ENCODE measurements at regions of chr2 and their contacts with region 1.

Region 1: DNA sequence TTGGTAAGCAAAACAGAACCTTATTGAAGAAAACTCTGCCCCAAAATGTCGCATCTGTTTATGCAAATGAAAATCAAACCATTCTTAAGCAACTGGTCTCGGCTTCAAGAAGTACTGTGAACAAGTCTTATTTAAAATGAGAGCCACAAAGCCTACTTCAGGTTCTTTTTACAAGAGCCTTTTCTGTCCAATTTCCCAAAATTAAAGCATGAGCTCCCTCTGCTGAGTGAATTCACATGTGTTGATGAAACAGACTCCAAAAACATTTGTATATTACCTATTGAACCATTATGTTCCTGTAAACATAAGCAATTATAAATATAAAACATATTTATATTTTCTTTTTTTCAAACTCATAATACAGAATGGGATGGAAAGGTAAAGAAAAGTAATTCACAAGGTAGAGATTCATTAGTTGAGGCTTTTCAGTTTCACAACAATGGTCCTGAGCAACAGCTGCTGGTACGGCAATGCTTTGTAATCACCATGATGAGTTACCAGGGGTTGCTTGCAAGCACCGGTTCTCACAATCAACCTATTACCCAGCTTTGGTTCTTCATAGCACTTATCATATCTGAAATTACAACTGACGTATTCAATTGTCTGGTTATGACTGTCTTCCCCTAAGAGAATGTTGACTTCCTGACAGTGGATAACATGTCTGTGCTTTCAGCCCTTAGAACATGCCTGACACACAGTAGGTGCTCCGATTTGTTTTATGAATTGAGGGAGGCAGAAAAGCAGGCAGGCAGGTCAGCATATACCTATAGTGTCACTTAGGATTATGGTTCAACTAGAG is 108.4 kb upstream of the BZW1 start:
- DNase-seq: no peak

Region 2: GRCh38 chr2:199979832-199980628 is 723.3 kb before region 1 on chr2:
- intact Hi-C with region 1: loop called (anchors 5 kb)
- DNase-seq: peak; percentile 83

Region 3: GRCh38 chr2:200578778-200579177 is 124.5 kb before region 1 on chr2:
- intact Hi-C with region 1: loop called (anchors 5 kb)
- DNase-seq: no peak